ENCODE measurements at regions of chr9 and their contacts with region 1.

Region 1: GRCh38 chr9:75071530-75072124 is 16.3 kb downstream of the NMRK1 start:
- DNase-seq: no peak
- H3K4me3 ChIP-seq: no peak overlapping the region
- CTCF ChIP-seq: no peak

Region 2: DNA sequence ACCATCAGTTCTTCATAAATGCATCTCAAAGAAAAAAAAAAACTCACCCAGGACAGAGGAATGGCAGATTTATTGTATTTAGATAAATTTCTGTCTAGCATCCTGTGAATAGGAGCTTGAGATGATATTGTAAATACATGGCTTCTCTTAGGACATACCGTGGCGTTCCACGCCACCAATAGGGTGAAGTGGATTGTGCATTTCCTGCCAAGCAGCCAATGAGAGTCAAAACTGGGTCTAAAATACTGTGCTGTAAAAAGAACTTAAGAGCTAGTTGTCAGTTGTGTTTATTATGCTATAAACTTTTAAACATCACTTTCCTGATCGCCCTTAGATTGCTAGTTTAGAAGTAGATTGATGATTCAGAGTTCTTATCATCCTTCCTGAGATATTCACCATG is 163.0 kb before region 1 on chr9:
- CTCF ChIA-PET with region 1: no interaction called
- POLR2A ChIA-PET with region 1: no interaction called
- DNase-seq: no peak
- H3K4me3 ChIP-seq: no peak overlapping the region
- CTCF ChIP-seq: no peak

Region 3: GRCh38 chr9:75088260-75088905 is 16.8 kb after region 1 on chr9 and contains the start of gene OSTF1:
- CTCF ChIA-PET with region 1: interaction called, 13 read pairs
- POLR2A ChIA-PET with region 1: no interaction called
- DNase-seq: peak; percentile 63
- H3K4me3 ChIP-seq: peak within 1 kb of the TSS; percentile 94
- CTCF ChIP-seq: no peak

Region 4: DNA sequence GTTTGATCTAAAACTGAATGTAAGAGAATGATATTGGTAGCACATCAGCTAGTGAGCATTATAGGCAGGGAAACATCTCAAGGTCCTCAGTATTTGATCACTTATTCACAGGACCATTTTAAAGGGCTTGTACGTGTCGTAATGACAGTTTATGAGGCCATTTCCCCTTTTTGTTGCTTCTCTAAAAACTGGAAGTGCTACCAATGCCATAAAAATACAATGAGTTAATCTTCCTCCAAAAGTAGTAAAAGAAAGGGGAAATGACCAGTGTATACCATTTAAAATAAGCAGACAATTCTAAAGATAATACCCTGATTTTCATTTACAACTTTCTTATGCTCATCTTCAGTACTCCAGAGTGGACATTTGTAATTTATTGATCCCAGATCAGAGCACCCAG is 533.0 kb after region 1 on chr9:
- CTCF ChIA-PET with region 1: no interaction called
- POLR2A ChIA-PET with region 1: no interaction called
- DNase-seq: no peak
- H3K4me3 ChIP-seq: no peak overlapping the region
- CTCF ChIP-seq: no peak